Right cardiac atrium (tissue), 5 donors: ENCODE measurements at regions of chr5 and their contacts with region 1.

Region 1: DNA sequence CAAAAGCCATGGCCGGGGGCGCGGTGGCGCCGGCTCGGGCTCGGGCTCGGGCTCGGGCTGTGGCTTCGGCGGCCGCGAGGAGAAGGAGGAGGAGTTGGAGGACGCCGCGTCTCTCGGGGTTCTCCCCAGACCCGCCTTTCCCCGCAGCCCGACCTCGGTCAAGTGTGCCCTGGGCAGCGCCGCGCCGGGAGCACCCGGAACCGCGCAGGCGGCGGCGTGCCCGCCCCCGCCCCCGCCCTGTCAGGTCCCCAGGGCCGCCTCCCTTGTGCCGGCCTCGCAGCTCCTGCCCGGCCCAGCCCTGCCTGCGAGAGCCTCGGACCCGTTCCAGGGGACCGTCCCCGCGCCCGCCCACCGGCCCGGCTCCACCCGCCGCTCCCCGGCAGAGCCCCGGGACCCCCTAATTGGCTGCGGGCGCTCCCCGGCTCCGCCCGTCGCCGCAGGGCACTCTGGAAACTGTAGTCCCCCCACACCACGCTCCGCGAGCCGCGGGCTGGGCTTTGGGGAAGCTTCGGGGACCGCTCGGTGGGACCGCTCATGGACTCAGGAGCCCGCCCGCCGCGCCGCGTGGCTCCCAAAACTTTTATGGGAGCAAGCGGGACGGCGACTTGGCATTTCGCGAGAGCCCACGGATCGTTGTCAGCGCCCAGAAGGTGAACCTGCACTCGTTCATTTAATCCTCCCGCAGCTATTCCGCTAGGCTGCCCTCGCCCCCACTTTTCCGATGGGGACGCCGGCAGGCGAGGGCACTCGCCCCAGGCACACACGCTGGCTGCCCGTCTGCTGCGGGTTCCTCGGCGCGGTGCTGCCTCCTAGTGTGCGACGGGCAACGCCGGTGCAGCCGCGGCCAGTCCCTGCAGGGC is at the start of gene STK10:
- DNase-seq: peak; percentile 95 to 97 (median 97)
- ATAC-seq: peak; percentile 96 to 98
- H3K4me3 ChIP-seq: peak within 1 kb of the TSS; percentile 93
- H3K27ac ChIP-seq: peak within 1 kb of the TSS; percentile 77
- H3K4me1 ChIP-seq: peaks cover 3% of the 10 kb centered on the region
- H3K27me3 ChIP-seq: no peaks in the 10 kb centered on the region
- total RNA-seq, gene STK10: 10.1 to 15.7 (median 11.3) TPM

Region 2: DNA sequence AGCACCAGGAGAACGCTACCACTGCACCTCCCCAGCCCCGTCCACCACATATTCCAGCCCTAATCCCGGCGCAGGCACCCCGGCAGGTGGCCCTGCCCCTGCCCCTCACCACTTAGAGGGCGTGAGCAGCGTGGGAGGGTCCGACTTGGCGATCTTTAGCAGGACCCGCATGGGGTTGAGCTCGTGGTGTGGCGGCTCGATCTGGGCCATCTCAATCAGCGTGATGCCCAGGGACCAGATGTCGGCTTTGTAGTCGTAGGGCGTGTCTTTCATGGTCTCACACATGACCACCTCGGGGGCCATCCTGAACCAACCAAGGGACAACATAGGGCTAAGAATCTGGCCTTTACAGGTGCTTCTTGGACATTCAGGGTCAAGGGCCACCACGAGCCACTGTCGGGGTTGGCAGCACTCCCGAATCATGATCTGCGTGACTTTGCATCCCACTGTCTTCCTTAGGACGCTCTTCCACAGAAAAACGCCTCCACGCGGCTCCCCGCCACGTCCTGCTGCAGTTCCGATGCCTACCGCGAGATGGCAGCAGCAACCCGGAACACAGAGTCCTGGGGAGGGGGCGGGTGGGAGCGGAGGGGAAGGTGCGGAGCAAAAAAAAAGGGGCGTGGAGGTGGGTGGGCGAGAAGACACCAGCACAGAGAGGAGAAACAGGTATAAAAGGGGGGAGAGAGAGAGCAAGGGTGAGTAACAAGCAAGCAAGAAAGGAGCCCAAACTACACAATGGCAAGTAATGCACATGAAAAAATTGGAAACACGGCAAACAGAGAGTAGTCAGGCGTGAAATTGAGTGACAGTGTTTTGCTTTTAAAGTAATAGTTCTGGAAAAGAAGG is 81.5 kb before region 1 on chr5:
- intact Hi-C with region 1: loop called (anchors 2 to 5 kb)
- DNase-seq: peak; percentile 44 to 85 (median 85)
- ATAC-seq: peak; percentile 14 to 36
- H3K4me3 ChIP-seq: no peak overlapping the region
- H3K27ac ChIP-seq: no peak overlapping the region
- H3K4me1 ChIP-seq: peaks cover 20% of the 10 kb centered on the region
- H3K27me3 ChIP-seq: no peaks in the 10 kb centered on the region

Region 3: DNA sequence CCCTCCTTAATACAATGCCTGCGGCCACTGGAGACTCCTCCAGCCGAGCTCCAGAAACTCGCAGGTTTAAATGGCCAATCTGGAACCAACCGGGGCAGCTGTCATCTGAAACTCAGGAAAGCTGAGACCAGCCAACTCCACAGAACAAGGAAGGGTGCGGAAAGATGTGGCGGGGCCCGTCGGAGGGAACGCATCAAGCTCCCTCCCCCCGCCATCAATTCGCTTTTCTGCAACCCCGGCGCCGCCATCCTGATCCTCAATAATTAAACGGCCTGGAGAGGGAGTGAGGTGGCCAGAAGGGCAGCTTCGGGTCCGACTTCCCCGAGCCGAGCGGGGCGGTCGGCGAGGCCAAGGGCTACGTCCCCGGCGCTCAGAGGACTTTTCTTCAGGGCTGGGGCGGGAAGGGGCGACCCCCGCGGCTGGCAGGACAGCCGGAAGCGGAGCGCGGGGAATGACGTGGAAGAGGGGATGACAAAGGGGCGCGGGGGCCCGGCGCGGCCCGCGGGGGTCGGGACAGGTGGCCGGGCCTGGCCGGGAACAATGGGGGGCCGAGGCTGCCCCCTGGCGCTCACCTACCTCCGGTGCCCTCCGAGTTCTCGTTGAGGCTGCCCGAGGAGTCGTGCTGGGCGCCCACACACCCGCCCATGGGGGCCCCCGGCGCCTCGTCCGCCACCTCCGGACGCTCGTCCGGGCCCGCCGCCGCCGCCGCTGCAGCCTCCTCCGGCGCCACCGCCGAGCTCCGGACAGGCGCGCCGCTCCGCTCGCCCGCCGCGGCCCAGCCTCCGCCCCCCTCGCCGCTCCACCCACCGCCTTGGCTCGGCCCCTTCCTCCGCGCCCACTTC is 95.0 kb after region 1 on chr5 and contains the start of gene UBTD2:
- intact Hi-C with region 1: loop called in 2 of 4 experiments (anchors 5 to 10 kb)
- DNase-seq: peak; percentile 86 to 95 (median 94)
- ATAC-seq: peak; percentile 86 to 93
- H3K4me3 ChIP-seq: peak within 1 kb of the TSS; percentile 79
- H3K27ac ChIP-seq: peak within 1 kb of the TSS; percentile 99
- H3K4me1 ChIP-seq: no peaks in the 10 kb centered on the region
- H3K27me3 ChIP-seq: no peaks in the 10 kb centered on the region
- total RNA-seq, gene UBTD2: 9.9 to 11.4 (median 10.8) TPM

Region 4: GRCh38 chr5:172293054-172293744 is 104.9 kb after region 1 on chr5:
- intact Hi-C with region 1: loop called in 2 of 4 experiments (anchors 10 kb)
- DNase-seq: peak; percentile 61 to 81 (median 76)
- ATAC-seq: peak; percentile 92 to 95
- H3K4me3 ChIP-seq: no peak overlapping the region
- H3K27ac ChIP-seq: no peak overlapping the region
- H3K4me1 ChIP-seq: no peaks in the 10 kb centered on the region
- H3K27me3 ChIP-seq: no peaks in the 10 kb centered on the region

Region 5: DNA sequence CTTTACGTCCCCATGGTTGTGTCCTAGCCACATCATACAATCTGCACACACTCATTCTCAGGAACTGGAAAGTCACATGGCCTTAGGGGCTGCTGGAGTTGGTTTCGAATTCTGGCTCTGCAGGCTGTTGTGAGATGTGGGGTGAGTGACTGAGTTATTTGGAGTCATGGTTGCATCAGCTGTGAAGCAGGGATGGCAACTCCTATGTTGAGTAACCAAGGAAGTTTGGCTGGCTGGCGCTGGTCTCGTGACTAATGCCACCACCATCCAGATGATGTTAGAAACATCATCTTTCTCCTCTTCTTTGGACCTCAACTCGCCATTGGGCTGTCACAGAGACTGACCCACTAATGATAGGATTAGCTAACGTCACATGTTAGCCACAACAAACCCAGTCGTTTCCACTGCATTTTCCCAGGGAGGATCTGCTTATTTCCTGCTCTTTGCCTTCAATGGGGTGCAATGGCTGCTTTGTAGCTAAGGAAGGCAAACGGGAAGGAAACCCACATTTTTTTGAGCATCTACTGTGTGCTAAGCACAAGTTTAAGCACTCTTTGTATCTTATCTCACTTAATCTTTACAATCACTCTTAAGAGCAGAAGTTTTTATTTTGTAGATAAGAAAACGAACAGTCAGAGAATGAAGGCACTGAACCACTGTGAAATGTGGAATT is 173.4 kb after region 1 on chr5:
- intact Hi-C with region 1: no loop called
- DNase-seq: no peak
- ATAC-seq: no peak
- H3K4me3 ChIP-seq: no peak overlapping the region
- H3K27ac ChIP-seq: no peak overlapping the region
- H3K4me1 ChIP-seq: no peaks in the 10 kb centered on the region
- H3K27me3 ChIP-seq: no peaks in the 10 kb centered on the region